Dendritic cell treated with granulocyte-macrophage colony-stimulating factor and Interleukin-4, amounts not matched to agents 40 ng/mL and 50 ng/mL, for 4 days (primary cell): ENCODE measurements at regions of chr10 and their contacts with region 1.

Region 1: GRCh38 chr10:17023386-17024298 is 106.0 kb downstream of the CUBN start:
- H3K4me3 Mint-ChIP-seq: peak overlapping the region; percentile 11
- H3K27ac Mint-ChIP-seq: peak overlapping the region; percentile 83
- H3K4me1 Mint-ChIP-seq: peaks cover 26% of the 10 kb centered on the region
- H3K27me3 Mint-ChIP-seq: no peaks in the 10 kb centered on the region

Region 2: GRCh38 chr10:16909961-16910792 is 113.5 kb before region 1 on chr10:
- intact Hi-C with region 1: loop called (anchors 5 kb)
- H3K4me3 Mint-ChIP-seq: peak overlapping the region; percentile 38
- H3K27ac Mint-ChIP-seq: peak overlapping the region; percentile 82
- H3K4me1 Mint-ChIP-seq: peaks cover 43% of the 10 kb centered on the region
- H3K27me3 Mint-ChIP-seq: peaks cover 4% of the 10 kb centered on the region